HCT116 (cell line): ENCODE measurements at regions of chr3 and their contacts with region 1.

Region 1: DNA sequence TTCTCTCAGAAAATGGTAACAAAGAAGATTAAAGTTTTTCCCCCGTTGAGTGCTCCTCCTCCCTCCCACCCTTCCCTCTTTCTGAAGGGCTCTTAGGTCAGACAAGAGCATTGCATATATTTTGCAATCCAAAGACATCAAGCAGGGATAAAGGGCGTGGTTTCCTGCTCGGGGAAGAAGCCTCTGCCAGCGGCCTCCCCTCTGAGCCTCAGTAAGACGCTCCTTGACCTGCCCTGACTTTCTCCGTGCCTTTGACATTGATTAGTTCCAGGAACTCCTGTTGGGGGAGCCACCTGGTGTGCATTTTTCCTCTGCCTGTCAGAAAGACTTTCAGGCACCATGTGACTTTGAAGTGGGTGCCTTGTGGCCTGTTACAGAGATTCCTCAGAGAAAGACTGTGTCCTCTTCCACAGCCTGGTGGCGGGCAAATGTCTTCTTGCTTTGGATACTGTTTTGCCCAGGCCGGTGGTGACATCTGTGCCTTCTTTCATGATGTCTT is 87.2 kb upstream of the TBL1XR1 start:
- DNase-seq: peak; percentile 71
- ATAC-seq: peak; percentile 86
- H3K4me3 ChIP-seq: peak overlapping the region in 1 of 2 experiments; percentile 0; a peak in 1 of 4 replicates
- H3K27ac ChIP-seq: peak overlapping the region; percentile 42
- H3K4me1 ChIP-seq: peaks cover 37 to 41% of the 10 kb centered on the region in 2 experiments
- H3K27me3 ChIP-seq: no peaks in the 10 kb centered on the region
- CTCF ChIP-seq: peak in 1 of 3 experiments; percentile 37; a peak in 2 of 6 replicates
- POLR2A ChIP-seq: no peak
- RAD21 ChIP-seq: no peak

Region 2: GRCh38 chr3:177345049-177345972 is 60.9 kb after region 1 on chr3:
- CTCF ChIA-PET with region 1: no interaction called
- POLR2A ChIA-PET with region 1: no interaction called
- RAD21 ChIA-PET with region 1: no interaction called
- intact Hi-C with region 1: loop called (anchors 2 kb)
- DNase-seq: peak; percentile 96
- ATAC-seq: peak; percentile 92
- H3K4me3 ChIP-seq: peak overlapping the region; percentile 8 to 36; a peak in 2 of 4 replicates
- H3K27ac ChIP-seq: peak overlapping the region; percentile 91
- H3K4me1 ChIP-seq: peaks cover 35 to 55% of the 10 kb centered on the region in 2 experiments
- H3K27me3 ChIP-seq: no peaks in the 10 kb centered on the region
- CTCF ChIP-seq: no peak
- POLR2A ChIP-seq: peak; percentile 68
- RAD21 ChIP-seq: peak; percentile 52

Region 3: DNA sequence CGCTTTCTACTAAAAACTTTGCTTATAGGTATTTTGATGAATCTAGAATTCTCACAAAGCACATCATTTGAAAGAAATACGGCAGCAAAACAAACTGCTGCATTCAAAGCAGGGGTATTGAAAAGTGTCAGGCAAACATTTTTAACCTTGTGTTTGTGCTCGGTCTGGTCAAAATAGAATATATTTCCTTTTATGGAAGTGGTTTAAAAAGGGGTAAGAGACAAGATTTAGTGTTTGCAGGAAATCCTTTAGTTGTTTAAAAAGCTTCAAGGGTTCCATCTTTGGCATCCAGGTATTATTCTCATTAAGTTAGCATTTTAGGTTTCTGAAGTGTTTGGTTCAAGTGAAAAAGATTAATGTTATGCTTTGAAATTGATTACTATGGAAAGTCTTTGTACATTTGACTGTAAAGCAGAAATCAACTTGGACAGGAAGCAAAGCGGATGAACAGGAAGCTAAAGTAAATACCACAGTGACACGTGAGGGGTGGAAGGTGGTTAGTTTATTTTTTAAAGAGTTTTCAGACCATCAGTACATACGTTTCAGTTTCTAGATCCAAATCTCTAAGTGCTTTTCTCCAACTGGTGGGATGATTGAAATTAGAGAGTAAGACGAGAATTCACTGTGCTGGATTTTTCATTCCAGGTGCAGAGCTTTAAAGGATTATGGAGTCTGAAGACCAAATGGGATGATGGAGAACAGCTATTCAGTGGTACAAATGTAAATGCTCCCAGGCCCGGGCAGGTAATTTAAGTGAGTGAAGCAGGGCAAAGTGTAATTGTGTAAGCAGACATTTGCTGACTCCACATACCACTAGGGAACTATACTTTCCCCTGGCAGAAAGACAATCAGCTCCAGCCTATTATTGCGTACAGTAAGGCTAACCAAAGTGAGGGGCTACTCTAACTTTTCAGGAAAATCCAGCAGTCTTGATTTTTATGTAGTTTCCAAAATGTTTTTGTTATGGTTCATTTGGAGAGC is 254.6 kb after region 1 on chr3:
- CTCF ChIA-PET with region 1: no interaction called
- POLR2A ChIA-PET with region 1: no interaction called
- RAD21 ChIA-PET with region 1: no interaction called
- intact Hi-C with region 1: no loop called
- DNase-seq: no peak
- ATAC-seq: no peak
- H3K4me3 ChIP-seq: no peak overlapping the region
- H3K27ac ChIP-seq: no peak overlapping the region
- H3K4me1 ChIP-seq: no peaks in the 10 kb centered on the region
- H3K27me3 ChIP-seq: no peaks in the 10 kb centered on the region
- CTCF ChIP-seq: no peak
- POLR2A ChIP-seq: no peak
- RAD21 ChIP-seq: no peak